ENCODE measurements at regions of chr14 and their contacts with region 1.

Region 1: GRCh38 chr14:67571272-67571850 is 28.7 kb downstream of the PIGH start:
- DNase-seq: peak; percentile 57 to 64
- ATAC-seq: peak; percentile 70 to 86 (median 76)
- H3K4me3 ChIP-seq: no peak overlapping the region
- H3K27ac ChIP-seq: no peak overlapping the region
- H3K4me1 ChIP-seq: no peaks in the 10 kb centered on the region
- H3K27me3 ChIP-seq: no peaks in the 10 kb centered on the region
- CTCF ChIP-seq: peak; percentile 63 to 84 (median 83)

Region 2: GRCh38 chr14:67526676-67527459 is 44.5 kb before region 1 on chr14:
- intact Hi-C with region 1: loop called in 7 of 10 experiments (anchors 2 to 10 kb)
- DNase-seq: peak in 1 of 2 donors; percentile 22
- ATAC-seq: peak in 7 of 8 donors; percentile 40 to 81 (median 66)
- H3K4me3 ChIP-seq: no peak overlapping the region
- H3K27ac ChIP-seq: no peak overlapping the region
- H3K4me1 ChIP-seq: peaks cover 0 to 6% (median 0%) of the 10 kb centered on the region in 9 donors
- H3K27me3 ChIP-seq: peaks cover 0 to 57% (median 18%) of the 10 kb centered on the region in 7 donors
- CTCF ChIP-seq: peak; percentile 31 to 74 (median 63)

Measured in heart right ventricle (tissue), 16 donors.